ENCODE measurements at regions of chr11 and their contacts with region 1.

Region 1: DNA sequence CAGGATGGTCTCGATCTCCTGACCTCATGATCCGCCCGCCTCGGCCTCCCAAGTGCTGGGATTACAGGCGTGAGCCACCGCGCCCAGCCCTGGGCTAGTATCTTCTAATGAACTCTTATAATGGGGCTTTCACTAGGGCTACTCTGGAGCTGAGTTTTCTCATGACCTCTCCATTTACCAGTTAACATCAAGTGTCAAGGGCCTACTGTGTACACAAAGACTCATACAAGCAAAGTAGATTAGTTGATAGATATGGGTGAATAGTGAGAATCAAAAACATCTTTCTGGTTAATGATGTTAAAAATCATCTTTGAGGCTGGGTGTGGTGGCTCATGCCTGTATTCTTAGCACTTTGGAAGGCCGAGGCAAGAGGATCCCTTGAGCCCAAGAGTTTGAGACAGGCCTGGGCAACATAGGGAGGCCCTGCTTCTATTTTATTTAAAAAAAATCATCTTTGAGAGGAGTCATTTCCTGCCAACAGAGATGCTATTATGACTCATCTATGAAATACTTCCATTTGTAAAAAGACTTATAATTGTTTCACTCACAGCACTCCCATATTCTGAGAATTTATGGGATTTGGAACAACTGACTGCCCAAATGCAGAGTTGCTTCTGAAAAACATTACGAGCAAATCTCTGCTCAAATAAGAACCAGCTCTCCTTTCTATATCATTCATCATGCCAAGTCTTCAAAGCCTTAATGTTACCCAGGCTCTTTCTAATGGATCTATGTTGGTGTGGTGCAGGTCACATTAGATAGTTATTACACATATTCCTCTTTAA is 57.1 kb downstream of the GDPD4 start:
- DNase-seq: no peak
- H3K4me3 Mint-ChIP-seq: no peak overlapping the region
- H3K27ac Mint-ChIP-seq: peak overlapping the region; percentile 60
- H3K4me1 Mint-ChIP-seq: peaks cover 29% of the 10 kb centered on the region
- H3K27me3 Mint-ChIP-seq: no peaks in the 10 kb centered on the region
- CTCF ChIP-seq: no peak

Region 2: GRCh38 chr11:77299528-77299993 is 55.1 kb after region 1 on chr11:
- CTCF ChIA-PET with region 1: no interaction called
- intact Hi-C with region 1: loop called (anchors 2 kb)
- DNase-seq: peak; percentile 79
- H3K4me3 Mint-ChIP-seq: peak overlapping the region; percentile 8
- H3K27ac Mint-ChIP-seq: peak overlapping the region; percentile 94
- H3K4me1 Mint-ChIP-seq: peaks cover 21% of the 10 kb centered on the region
- H3K27me3 Mint-ChIP-seq: no peaks in the 10 kb centered on the region
- CTCF ChIP-seq: no peak